ENCODE measurements at regions of chr4 and their contacts with region 1.

Region 1: GRCh38 chr4:6783053-6783981 is 790 bp downstream of the KIAA0232 start:
- DNase-seq: peak; percentile 60 to 94
- H3K4me3 ChIP-seq: peak overlapping the region; percentile 87 to 98
- H3K27ac ChIP-seq: peak overlapping the region; percentile 98 to 100
- H3K4me1 ChIP-seq: peaks cover 18 to 36% of the 10 kb centered on the region in 2 donors
- H3K27me3 ChIP-seq: no peaks in the 10 kb centered on the region
- CTCF ChIP-seq: peak in 2 of 3 experiments; percentile 9 to 28

Region 2: GRCh38 chr4:6688879-6689505 is 94.3 kb before region 1 on chr4:
- intact Hi-C with region 1: no loop called
- DNase-seq: peak in 1 of 2 donors; percentile 73
- H3K4me3 ChIP-seq: no peak overlapping the region
- H3K27ac ChIP-seq: no peak overlapping the region
- H3K4me1 ChIP-seq: no peaks in the 10 kb centered on the region
- H3K27me3 ChIP-seq: no peaks in the 10 kb centered on the region
- CTCF ChIP-seq: no peak

Region 3: DNA sequence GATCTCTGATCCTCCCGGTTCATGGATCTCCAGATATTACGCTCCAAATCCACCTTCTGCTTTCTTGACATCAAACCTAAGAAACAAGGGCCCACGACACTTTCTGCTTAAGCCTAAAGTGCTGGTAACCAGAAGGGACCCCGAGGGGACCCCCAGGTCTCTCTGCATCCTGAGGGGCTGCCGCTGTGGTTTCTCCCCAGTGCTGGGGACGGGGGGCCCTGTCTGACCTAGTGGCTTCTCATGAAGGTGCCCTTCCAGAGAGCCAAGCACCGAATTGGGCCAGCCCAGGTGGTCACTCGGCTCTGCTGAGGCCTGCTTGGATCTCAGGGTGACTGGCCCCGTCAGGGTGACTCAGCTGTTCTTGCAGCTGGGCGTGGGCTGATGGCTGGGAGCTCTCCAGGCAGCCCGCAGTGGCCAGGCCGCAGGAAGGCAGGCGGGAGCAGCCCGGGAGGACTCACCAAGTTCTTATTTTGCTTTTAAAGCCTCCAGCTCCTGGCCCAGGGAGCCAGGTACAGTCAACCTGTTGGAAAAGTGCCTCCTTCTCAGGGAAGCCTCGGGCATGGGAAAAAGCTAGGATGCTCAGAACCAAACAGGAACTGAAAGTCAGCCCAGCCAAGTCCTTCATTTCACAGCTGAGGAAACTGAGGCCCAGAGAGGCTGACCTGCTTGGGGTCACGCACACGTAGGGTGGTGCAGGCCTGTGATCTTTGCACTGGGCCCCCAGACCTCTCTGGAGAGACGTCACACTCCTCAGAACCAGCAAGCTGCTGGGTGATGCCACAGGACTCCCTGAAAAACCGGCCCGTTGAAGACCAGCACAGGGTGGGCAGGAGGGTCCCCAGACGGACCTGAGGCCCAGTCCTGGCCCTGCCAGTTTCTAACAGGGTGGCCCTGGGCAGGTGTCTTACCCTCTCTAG is 50.6 kb before region 1 on chr4:
- intact Hi-C with region 1: loop called (anchors 5 kb)
- DNase-seq: peak; percentile 56 to 87
- H3K4me3 ChIP-seq: no peak overlapping the region
- H3K27ac ChIP-seq: peak overlapping the region; percentile 63 to 80
- H3K4me1 ChIP-seq: peaks cover 0 to 8% of the 10 kb centered on the region in 2 donors
- H3K27me3 ChIP-seq: no peaks in the 10 kb centered on the region
- CTCF ChIP-seq: no peak

Region 4: GRCh38 chr4:6855692-6856297 is 72.5 kb after region 1 on chr4:
- intact Hi-C with region 1: loop called (anchors 5 kb)
- DNase-seq: no peak
- H3K4me3 ChIP-seq: no peak overlapping the region
- H3K27ac ChIP-seq: peak overlapping the region; percentile 36 to 68
- H3K4me1 ChIP-seq: peaks cover 2 to 7% of the 10 kb centered on the region in 2 donors
- H3K27me3 ChIP-seq: no peaks in the 10 kb centered on the region
- CTCF ChIP-seq: no peak

Region 5: DNA sequence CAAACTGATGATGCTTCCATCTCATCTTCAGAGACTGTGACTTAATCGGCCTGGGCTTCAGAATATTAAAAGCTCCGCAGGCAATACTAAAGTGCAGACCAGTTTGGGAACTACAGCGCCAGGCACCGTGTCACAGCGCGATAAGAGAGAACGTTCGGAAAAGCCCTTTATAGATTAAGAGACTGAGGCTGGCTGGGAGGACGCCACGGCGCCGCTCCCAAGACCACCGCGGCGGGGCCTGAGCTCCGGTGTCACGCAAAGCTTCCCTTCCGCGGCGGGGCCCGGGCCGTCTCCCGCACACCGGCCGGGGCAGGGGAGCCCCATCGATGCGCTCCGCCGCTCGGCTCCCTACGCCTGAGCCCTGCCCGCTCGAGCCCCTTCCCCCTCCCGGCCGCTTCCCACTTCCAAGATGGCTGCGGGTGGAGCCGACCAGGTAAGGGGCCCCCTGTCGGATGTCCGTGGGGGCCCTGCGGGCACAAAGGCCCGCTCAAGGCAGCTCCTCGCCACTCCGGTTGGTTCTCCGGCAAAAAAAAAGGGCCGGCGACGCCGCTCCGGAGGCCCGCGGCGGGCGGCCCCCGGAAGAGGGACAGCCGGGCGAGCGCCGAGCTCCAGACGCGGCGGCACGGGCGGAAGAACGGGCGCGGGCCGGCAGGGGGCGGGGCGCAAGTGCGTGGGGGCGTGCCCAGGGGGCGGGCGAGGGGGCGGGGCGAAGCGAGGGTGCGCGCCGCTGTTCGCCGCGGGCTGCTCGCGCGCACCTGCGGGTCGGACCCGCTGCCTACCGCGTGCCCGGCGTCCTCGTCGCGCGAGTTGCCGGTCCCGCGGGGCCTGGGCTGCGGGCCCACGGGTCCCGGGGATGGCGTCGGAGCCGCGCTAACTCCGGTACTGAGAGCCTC is 126.0 kb after region 1 on chr4 and contains the start of gene TBC1D14:
- intact Hi-C with region 1: loop called (anchors 1 kb)
- DNase-seq: peak; percentile 54 to 93
- H3K4me3 ChIP-seq: peak within 1 kb of the TSS; percentile 84 to 94
- H3K27ac ChIP-seq: peak within 1 kb of the TSS; percentile 97 to 99
- H3K4me1 ChIP-seq: peaks cover 0 to 32% of the 10 kb centered on the region in 2 donors
- H3K27me3 ChIP-seq: no peaks in the 10 kb centered on the region
- CTCF ChIP-seq: peak in 1 of 3 experiments; percentile 4
- total RNA-seq, gene TBC1D14: 26.4 TPM

Region 6: GRCh38 chr4:7067452-7068278 is 284.3 kb after region 1 on chr4 and contains the start of gene GRPEL1:
- intact Hi-C with region 1: loop called (anchors 5 kb)
- DNase-seq: peak; percentile 98 to 100
- H3K4me3 ChIP-seq: peak within 1 kb of the TSS; percentile 90 to 94
- H3K27ac ChIP-seq: peak within 1 kb of the TSS; percentile 86 to 95
- H3K4me1 ChIP-seq: peaks cover 10 to 18% of the 10 kb centered on the region in 2 donors
- H3K27me3 ChIP-seq: no peaks in the 10 kb centered on the region
- CTCF ChIP-seq: peak in 1 of 3 experiments; percentile 4
- total RNA-seq, gene GRPEL1: 42.5 TPM